H1 (cell line): ENCODE measurements at regions of chr13 and their contacts with region 1.

Region 1: GRCh38 chr13:42807866-42808265 is 26.5 kb downstream of the FAM216B start:
- DNase-seq: no peak
- H3K4me3 ChIP-seq: no peak overlapping the region
- H3K27ac ChIP-seq: no peak overlapping the region
- H3K4me1 ChIP-seq: 0 out of 7 replicates have a peak, but pooled peaks cover 0 to 2% (median 0%) of the 10 kb centered on the region in 4 experiments
- H3K27me3 ChIP-seq: no peaks in the 10 kb centered on the region
- CTCF ChIP-seq: no peak
- EP300 ChIP-seq: no peak
- POLR2A ChIP-seq: no peak
- RAD21 ChIP-seq: no peak

Region 2: GRCh38 chr13:42820451-42820850 is 12.6 kb after region 1 on chr13:
- CTCF ChIA-PET with region 1: interaction called, 5 read pairs
- POLR2A ChIA-PET with region 1: interaction called, 10 read pairs
- DNase-seq: no peak
- H3K4me3 ChIP-seq: no peak overlapping the region
- H3K27ac ChIP-seq: no peak overlapping the region
- H3K4me1 ChIP-seq: no peaks in the 10 kb centered on the region
- H3K27me3 ChIP-seq: no peaks in the 10 kb centered on the region
- CTCF ChIP-seq: no peak
- EP300 ChIP-seq: no peak
- POLR2A ChIP-seq: no peak
- RAD21 ChIP-seq: no peak

Region 3: DNA sequence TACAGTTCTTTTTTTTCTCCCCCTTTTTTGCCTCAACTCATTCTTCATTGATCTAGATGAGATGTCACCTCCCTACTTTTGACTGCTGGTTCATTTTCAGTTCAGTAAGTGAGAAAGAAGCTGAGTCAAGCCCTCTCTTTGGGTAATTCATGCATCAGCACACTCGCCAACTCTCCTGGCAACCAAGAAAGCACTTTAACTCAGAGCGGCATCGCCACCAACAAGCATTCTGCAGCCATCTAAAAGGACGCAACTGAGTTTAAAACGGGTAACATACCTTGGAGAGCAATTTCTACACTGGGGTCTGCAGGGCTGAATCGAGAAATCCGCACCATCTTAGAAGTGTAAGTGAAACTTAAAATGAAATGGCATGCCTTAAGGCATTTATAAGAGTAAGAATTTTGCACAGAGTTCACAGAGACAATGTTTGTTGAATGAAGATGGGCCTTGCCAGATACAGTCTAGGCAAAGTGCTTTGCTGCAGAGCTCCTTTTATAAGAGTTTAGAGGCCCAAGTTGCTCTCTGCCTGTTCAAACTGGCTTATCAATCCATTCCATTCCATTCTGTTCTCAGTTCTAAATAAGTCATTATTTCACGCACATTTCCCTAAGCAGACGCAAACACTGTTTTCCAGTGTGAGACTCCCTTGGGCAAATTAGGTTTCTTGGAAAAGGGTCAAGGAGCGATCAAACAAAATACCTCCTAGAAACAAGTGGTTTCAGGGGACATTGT is 640.9 kb after region 1 on chr13:
- CTCF ChIA-PET with region 1: no interaction called
- POLR2A ChIA-PET with region 1: no interaction called
- DNase-seq: no peak
- H3K4me3 ChIP-seq: no peak overlapping the region
- H3K27ac ChIP-seq: no peak overlapping the region
- H3K4me1 ChIP-seq: no peaks in the 10 kb centered on the region; a peak in 1 of 7 replicates
- H3K27me3 ChIP-seq: no peaks in the 10 kb centered on the region
- CTCF ChIP-seq: no peak
- EP300 ChIP-seq: no peak
- POLR2A ChIP-seq: no peak
- RAD21 ChIP-seq: no peak